H1 (cell line): ENCODE measurements at regions of chr3 and their contacts with region 1.

Region 1: GRCh38 chr3:161305095-161305991 is 66.0 kb downstream of the SPTSSB start:
- DNase-seq: no peak
- H3K4me3 ChIP-seq: no peak overlapping the region
- H3K27ac ChIP-seq: no peak overlapping the region
- H3K4me1 ChIP-seq: no peaks in the 10 kb centered on the region
- H3K27me3 ChIP-seq: no peaks in the 10 kb centered on the region
- CTCF ChIP-seq: peak in 2 of 3 experiments; percentile 20 to 56; a peak in 2 of 4 replicates
- EP300 ChIP-seq: no peak
- POLR2A ChIP-seq: no peak
- RAD21 ChIP-seq: peak; percentile 36 to 46

Region 2: DNA sequence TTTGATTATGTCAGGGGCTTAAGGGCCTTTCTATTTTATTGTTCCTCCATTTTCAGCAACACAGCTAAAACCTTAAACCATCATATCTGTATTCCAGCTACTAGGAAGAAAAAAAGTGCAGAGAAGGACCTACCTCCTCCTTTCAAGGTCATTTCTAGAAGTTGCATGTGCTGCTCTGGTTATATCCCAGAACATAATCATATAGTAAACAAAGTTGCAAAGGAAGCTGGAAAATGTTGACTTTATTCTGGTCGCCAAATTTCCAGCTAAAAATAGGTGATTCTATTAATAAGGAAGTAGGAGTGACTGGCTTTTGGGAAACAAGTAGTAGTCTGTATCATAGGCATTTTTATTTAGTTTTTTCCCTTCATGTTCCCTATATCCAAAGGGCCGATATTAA is 178.8 kb before region 1 on chr3:
- CTCF ChIA-PET with region 1: no interaction called
- POLR2A ChIA-PET with region 1: no interaction called
- DNase-seq: no peak
- H3K4me3 ChIP-seq: no peak overlapping the region
- H3K27ac ChIP-seq: no peak overlapping the region
- H3K4me1 ChIP-seq: no peaks in the 10 kb centered on the region
- H3K27me3 ChIP-seq: no peaks in the 10 kb centered on the region
- CTCF ChIP-seq: no peak
- EP300 ChIP-seq: no peak
- POLR2A ChIP-seq: no peak
- RAD21 ChIP-seq: no peak

Region 3: GRCh38 chr3:161295325-161295724 is 10.0 kb before region 1 on chr3:
- CTCF ChIA-PET with region 1: interaction called, 54 read pairs
- POLR2A ChIA-PET with region 1: interaction called, 4 read pairs
- DNase-seq: no peak
- H3K4me3 ChIP-seq: no peak overlapping the region
- H3K27ac ChIP-seq: no peak overlapping the region
- H3K4me1 ChIP-seq: no peaks in the 10 kb centered on the region
- H3K27me3 ChIP-seq: no peaks in the 10 kb centered on the region
- CTCF ChIP-seq: no peak
- EP300 ChIP-seq: no peak
- POLR2A ChIP-seq: no peak
- RAD21 ChIP-seq: no peak

Region 4: DNA sequence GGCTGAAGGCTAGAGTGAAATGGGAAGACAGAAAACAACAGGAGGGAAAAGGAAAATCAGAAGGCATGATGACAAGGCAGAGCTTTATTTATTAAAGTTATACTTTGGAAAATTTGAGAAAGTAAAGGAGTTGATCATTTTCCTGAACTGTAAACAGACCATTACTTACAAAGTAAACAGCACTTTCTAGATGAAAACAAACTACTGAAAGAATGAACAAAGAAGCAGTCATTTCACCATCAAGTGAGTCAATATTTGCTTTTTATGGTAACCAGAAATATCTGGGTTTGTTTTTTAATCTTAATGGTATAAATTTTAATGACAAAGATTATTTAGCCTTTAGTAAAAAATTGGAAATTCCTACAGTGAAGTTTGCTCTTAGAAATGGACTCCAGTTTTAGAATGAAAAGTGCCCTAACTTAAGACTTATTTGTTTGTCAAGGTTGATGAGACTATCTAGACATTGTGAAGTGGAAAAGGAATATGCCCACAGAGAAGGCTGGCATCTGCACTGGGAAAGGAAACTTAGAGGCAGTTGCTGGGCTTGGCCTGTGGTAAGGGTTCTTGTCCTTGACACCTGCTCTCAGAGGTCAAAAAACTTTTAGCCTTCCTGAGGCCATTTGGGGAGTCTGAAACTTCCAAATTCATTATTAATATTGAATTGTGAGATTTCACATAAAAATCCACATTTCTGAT is 18.7 kb after region 1 on chr3:
- CTCF ChIA-PET with region 1: interaction called, 21 read pairs
- POLR2A ChIA-PET with region 1: no interaction called
- DNase-seq: no peak
- H3K4me3 ChIP-seq: no peak overlapping the region
- H3K27ac ChIP-seq: no peak overlapping the region
- H3K4me1 ChIP-seq: no peaks in the 10 kb centered on the region
- H3K27me3 ChIP-seq: no peaks in the 10 kb centered on the region
- CTCF ChIP-seq: no peak
- EP300 ChIP-seq: no peak
- POLR2A ChIP-seq: no peak
- RAD21 ChIP-seq: no peak